ENCODE measurements at regions of chr11 and their contacts with region 1.

Region 1: DNA sequence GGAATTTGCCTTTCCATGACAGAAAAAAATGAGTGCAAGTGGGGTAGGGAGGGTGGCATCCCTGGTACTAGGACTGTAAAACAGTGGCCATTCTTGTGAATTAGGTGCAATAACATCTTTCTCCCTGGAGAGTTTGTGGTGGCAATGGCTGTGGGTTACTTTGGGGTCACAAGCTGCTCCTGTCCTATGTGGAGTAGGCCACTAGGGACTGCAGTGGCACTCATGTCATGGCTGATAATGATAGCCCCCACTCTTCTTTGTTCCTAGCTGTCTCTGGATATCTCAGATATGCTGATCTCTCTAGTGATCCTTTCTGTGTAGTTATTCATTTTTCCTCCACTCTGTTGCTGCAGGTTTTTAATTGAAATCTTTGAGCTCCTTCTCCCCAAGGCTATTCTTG is 270.5 kb upstream of the CHORDC1 start:
- DNase-seq: no peak
- H3K4me3 Mint-ChIP-seq: no peak overlapping the region
- H3K27ac Mint-ChIP-seq: no peak overlapping the region
- H3K4me1 Mint-ChIP-seq: no peaks in the 10 kb centered on the region
- H3K27me3 Mint-ChIP-seq: no peaks in the 10 kb centered on the region
- CTCF ChIP-seq: no peak

Region 2: DNA sequence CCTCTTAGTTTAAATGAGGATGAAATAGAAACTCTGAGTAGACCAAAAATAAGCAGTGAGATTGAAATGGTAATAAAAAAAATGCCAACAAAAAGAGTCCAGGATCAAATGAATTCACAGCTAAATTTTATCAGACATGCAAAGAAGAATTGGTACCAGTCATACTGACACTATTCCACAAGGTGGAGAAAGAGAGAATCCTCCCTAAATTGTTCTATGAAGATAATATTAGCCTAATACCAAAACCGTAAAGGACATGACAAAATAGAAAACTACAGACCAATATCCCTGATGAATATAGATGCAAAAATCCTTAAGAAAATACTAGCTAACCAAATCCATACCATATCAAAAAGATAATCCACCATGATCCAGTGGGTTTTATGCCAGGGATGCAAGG is 100.7 kb before region 1 on chr11:
- CTCF ChIA-PET with region 1: no interaction called
- POLR2A ChIA-PET with region 1: no interaction called
- intact Hi-C with region 1: no loop called
- DNase-seq: no peak
- H3K4me3 Mint-ChIP-seq: no peak overlapping the region
- H3K27ac Mint-ChIP-seq: no peak overlapping the region
- H3K4me1 Mint-ChIP-seq: no peaks in the 10 kb centered on the region
- H3K27me3 Mint-ChIP-seq: no peaks in the 10 kb centered on the region
- CTCF ChIP-seq: no peak

Region 3: GRCh38 chr11:90476442-90477007 is 16.9 kb before region 1 on chr11:
- CTCF ChIA-PET with region 1: interaction called, 10 read pairs
- POLR2A ChIA-PET with region 1: interaction called, 3 read pairs
- intact Hi-C with region 1: no loop called
- DNase-seq: peak; percentile 71
- H3K4me3 Mint-ChIP-seq: no peak overlapping the region
- H3K27ac Mint-ChIP-seq: peak overlapping the region; percentile 16
- H3K4me1 Mint-ChIP-seq: peaks cover 7% of the 10 kb centered on the region
- H3K27me3 Mint-ChIP-seq: no peaks in the 10 kb centered on the region
- CTCF ChIP-seq: peak; percentile 58